ENCODE measurements at regions of chr2 and their contacts with region 1.

Region 1: GRCh38 chr2:20446917-20447436 is at the start of gene RHOB:
- DNase-seq: peak; percentile 82 to 93 (median 88)
- ATAC-seq: peak; percentile 94
- H3K4me3 Mint-ChIP-seq: peak within 1 kb of the TSS; percentile 76 to 92 (median 84)
- H3K27ac Mint-ChIP-seq: peak within 1 kb of the TSS in 9 of 10 donors; percentile 31 to 92 (median 79)
- H3K4me1 Mint-ChIP-seq: peaks cover 0 to 15% (median 7%) of the 10 kb centered on the region in 4 donors
- H3K27me3 Mint-ChIP-seq: peaks cover 0 to 9% (median 1%) of the 10 kb centered on the region in 5 donors
- polyA plus RNA-seq, gene RHOB: 1.3 to 2.0 (median 1.6) TPM

Region 2: GRCh38 chr2:20350753-20351554 is 96.0 kb before region 1 on chr2 and contains the start of gene PUM2:
- POLR2A ChIA-PET with region 1: interaction called, 12 read pairs
- DNase-seq: peak; percentile 95 to 98 (median 96)
- ATAC-seq: peak; percentile 82 to 83
- H3K4me3 Mint-ChIP-seq: peak within 1 kb of the TSS in 7 of 10 donors; percentile 84 to 96 (median 93)
- H3K27ac Mint-ChIP-seq: peak within 1 kb of the TSS in 9 of 10 donors; percentile 72 to 97 (median 91)
- H3K4me1 Mint-ChIP-seq: peaks cover 16 to 39% (median 36%) of the 10 kb centered on the region in 4 donors
- H3K27me3 Mint-ChIP-seq: no peaks in the 10 kb centered on the region
- polyA plus RNA-seq, gene PUM2: 17.1 to 19.0 (median 18.0) TPM

Region 3: DNA sequence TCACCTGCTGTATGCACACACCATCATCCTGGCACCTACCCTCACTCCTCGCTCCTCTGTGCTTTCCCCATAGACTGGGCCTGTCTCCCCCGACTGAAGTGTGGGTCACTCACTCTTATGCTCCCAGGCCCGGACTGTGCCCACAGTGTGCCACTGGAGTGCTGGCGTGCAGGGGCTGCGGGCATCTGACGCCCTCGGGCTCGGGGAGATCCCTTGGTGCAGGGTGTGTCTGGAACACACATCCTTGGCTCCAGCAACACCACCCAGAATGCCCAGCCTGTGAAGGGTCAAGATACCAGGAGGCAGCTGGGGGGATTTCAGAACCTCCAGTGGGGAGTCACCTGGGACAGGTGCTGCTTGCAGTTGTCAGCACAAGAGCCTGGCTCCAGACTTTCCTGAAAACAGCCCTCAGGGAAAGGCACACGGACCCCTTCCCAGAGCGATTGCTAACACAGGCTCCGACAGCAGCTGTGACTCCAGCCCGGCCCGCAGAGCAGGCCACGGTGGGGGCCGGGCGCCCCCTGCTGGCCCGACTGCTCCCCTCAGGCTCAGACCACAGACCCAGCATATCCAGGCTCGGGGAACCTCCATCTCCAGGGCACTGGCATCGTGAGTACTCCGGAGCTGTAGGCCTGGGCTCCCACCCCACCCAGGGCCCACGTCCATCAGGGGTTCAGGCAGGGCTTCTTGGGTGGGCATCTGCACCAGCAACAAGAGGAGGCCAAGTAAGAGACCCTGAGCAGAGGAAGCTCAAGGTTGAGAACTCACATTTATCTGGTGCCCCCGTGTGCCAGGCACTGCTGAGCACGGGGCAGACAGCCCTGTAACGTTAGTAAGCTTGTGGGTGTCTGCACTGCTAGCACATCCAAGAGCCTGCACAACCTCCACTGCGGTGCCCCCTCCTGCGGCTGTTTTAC is 195.3 kb after region 1 on chr2:
- POLR2A ChIA-PET with region 1: interaction called, 16 read pairs
- DNase-seq: peak; percentile 47 to 82 (median 74)
- ATAC-seq: peak; percentile 99 to 100
- H3K4me3 Mint-ChIP-seq: no peak overlapping the region
- H3K27ac Mint-ChIP-seq: peak overlapping the region in 2 of 10 donors; percentile 52 to 59
- H3K4me1 Mint-ChIP-seq: peaks cover 5 to 17% (median 13%) of the 10 kb centered on the region in 4 donors
- H3K27me3 Mint-ChIP-seq: no peaks in the 10 kb centered on the region

Region 4: DNA sequence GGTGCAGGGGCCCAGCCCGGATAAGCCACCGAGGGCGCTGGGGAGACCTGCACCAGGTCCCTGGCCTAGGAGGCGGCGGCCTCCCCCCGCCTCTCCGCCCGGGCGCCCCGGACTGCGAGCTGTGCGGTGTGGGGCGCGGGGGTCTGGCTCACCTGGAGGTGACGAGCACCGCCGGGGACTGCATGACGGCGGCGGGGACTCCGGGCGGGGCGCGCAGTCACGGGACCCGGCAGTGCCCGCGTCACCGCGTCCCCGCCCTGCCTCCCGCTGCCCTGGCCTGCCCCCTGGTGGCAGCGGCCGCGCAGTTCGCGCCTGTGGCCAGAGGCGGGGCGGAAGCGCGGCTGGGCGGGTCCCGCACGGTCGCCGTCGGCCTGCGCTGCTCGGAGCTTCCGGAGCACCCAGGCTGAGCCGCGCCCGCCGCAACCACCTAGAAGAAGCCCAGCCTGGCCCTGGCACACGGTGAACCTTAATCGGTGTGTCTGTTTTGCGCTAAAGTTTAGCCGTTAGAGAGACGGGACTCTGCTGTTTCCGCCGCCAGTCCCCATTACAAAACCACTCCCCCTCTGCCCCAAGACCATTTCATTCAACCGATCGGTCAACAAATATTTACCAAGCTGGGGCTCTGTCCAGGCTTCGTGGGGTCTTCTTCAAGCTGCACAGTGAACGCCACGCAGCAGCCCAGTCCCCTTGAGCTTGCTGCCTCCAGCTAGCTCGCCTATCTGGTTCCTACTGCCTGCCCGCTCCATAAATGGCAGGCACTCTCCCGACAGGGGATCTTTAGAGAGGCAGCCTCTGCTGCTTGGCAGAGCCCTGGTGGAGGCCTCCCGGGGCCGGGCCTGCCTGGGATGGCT is 204.1 kb after region 1 on chr2 and contains the start of gene HS1BP3:
- POLR2A ChIA-PET with region 1: interaction called, 65 read pairs
- DNase-seq: peak; percentile 84 to 95 (median 90)
- ATAC-seq: peak; percentile 90 to 93
- H3K4me3 Mint-ChIP-seq: peak within 1 kb of the TSS; percentile 79 to 95 (median 88)
- H3K27ac Mint-ChIP-seq: peak within 1 kb of the TSS; percentile 94 to 98 (median 97)
- H3K4me1 Mint-ChIP-seq: peaks cover 27 to 45% (median 37%) of the 10 kb centered on the region in 4 donors
- H3K27me3 Mint-ChIP-seq: peaks cover 0 to 3% (median 0%) of the 10 kb centered on the region in 5 donors
- polyA plus RNA-seq, gene HS1BP3: 11.0 to 15.4 (median 11.6) TPM

Measured in naive thymus-derived CD8-positive, alpha-beta T cell (primary cell).